WTC11 (cell line): ENCODE measurements at regions of chr1 and their contacts with region 1.

Region 1: DNA sequence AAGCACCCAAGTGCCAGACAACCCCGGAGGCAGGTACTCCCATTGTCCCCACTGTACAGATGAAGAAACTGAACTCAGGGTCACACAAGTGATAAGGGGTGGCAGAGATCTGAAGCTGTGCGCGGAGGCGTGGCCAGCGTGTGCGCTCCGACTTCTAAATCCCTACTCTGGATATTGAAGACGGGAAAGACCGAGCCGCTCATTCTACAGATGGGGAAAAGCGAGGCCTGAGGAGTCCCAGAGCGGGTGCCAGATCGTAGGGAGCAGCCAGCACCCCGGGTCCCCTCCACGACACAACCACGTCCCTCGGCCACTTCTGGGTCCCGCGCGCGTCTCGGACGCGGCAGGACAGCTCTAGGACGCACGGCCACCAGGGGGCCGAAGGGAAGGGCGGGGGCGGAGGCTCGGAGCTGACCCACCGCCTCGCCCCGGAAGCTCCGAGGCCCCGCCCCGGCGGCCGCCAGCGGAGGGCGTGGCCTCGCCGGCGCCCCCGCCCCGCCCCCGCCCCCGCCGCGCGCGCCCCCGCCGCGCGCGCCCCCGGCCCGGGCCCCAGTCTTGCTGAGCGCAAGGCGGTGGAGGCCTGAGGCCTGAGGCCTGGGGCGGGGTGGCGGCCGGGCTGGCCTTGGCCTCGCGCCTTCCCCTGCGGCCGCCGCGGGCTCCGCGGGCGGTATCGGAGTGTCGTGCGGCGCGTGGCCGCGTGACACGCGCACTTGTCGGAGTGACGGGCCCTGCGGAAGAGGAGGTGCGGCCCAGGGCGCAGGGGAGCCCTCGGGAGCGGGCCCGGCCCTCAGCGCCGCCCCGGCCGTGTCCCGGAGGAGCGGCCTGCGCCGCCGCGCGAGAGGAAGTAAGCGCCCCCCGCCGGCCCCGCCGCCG is at the start of gene H6PD:
- DNase-seq: peak; percentile 76
- ATAC-seq: peak; percentile 82
- H3K4me3 Mint-ChIP-seq: peak within 1 kb of the TSS; percentile 85
- H3K27ac Mint-ChIP-seq: peak within 1 kb of the TSS; percentile 72
- H3K4me1 Mint-ChIP-seq: peaks cover 15% of the 10 kb centered on the region
- H3K27me3 Mint-ChIP-seq: peaks cover 2% of the 10 kb centered on the region; the same call in 1 of the 2 replicates
- CTCF ChIP-seq: no peak
- total RNA-seq, gene H6PD: 7.4 to 7.9 TPM (median 7.8 TPM) in 3 replicates

Region 2: DNA sequence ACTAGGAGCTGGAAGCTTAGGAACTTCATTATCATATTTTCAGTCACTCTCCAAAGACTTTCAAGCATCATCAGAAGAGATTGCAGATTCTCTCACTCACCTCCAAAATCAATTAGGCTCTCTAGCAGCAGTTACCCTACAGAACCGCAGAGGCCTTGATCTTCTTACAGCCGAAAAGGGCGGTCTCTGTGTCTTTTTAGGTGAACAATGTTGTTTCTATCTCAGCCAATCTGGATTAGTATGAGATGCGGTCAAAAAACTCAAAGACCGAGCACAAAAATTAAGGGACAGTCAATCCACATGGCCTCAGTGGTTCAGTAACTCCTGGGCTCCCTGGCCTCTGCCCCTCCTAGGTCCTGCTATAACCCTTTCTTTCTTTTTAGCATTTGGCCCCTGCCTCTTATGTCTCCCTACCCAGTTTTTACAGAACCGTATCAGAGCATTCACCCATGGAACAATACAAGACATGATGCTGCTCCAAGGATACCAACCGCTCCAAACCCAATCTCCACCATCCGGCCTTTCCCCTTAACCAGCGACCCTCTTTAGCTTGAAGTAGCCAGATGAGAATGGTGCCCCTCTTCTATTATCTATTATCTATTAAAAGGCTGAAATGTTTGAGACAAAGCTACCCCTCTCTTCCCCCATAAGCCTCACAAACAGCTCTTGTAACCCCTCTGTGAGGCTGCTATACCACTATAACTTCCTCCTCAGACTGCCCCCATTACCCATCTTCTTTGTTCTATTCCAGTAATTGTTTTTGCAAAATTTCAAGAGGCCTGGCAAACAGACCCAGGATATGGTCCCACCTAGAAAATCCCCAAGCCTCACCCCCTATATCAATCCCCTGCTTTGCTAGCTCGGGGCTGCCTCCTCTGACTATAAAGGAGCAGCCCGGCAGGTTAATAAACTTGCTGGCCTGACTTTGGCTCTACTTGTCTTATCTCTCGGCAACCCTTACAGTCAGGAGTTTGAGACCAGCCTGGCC is 307.5 kb before region 1 on chr1:
- CTCF ChIA-PET with region 1: no interaction called
- POLR2A ChIA-PET with region 1: no interaction called
- DNase-seq: no peak
- ATAC-seq: no peak
- H3K4me3 Mint-ChIP-seq: no peak overlapping the region
- H3K27ac Mint-ChIP-seq: no peak overlapping the region
- H3K4me1 Mint-ChIP-seq: no peaks in the 10 kb centered on the region
- H3K27me3 Mint-ChIP-seq: no peaks in the 10 kb centered on the region
- CTCF ChIP-seq: no peak

Region 3: GRCh38 chr1:9181176-9181906 is 53.1 kb before region 1 on chr1:
- CTCF ChIA-PET with region 1: interaction called, 10 read pairs
- POLR2A ChIA-PET with region 1: no interaction called
- DNase-seq: peak; percentile 89
- ATAC-seq: peak; percentile 74
- H3K4me3 Mint-ChIP-seq: peak overlapping the region; percentile 90
- H3K27ac Mint-ChIP-seq: peak overlapping the region; percentile 95
- H3K4me1 Mint-ChIP-seq: peaks cover 48% of the 10 kb centered on the region
- H3K27me3 Mint-ChIP-seq: peaks cover 14% of the 10 kb centered on the region
- CTCF ChIP-seq: peak; percentile 96

Region 4: GRCh38 chr1:9201401-9202239 is 32.8 kb before region 1 on chr1:
- CTCF ChIA-PET with region 1: interaction called, 11 read pairs
- POLR2A ChIA-PET with region 1: no interaction called
- DNase-seq: no peak
- ATAC-seq: no peak
- H3K4me3 Mint-ChIP-seq: peak overlapping the region; percentile 57
- H3K27ac Mint-ChIP-seq: no peak overlapping the region
- H3K4me1 Mint-ChIP-seq: peaks cover 28% of the 10 kb centered on the region
- H3K27me3 Mint-ChIP-seq: peaks cover 81% of the 10 kb centered on the region
- CTCF ChIP-seq: no peak